IMR-90 (cell line): ENCODE measurements at regions of chr15 and their contacts with region 1.

Region 1: DNA sequence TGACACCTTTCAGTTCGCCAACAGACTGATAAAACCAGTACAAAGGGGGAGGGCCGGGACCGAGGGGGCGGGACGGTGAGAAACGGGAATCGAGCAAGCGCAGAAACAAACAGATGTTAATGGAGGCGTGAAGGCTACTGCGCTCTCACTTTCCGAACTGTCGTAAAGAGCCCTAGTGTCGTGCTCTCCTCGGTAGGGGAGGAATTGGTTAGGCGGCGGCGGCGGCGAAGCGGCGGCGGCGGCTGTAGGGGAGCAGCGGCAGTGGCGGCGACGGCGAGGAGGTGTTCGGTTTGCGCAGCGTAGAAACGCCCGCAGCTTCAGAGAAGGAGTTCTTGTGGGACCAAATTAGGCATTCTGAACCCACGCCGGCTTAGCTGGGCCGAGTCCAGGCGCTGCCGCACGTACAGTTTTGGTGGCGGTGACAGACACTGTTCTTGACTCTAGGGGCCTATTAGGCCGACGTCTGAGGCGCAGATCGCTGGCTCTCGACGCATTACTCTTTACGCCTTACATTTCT is at the start of gene RNF111:
- DNase-seq: peak; percentile 97
- ATAC-seq: peak; percentile 93
- H3K4me3 ChIP-seq: peak within 1 kb of the TSS; percentile 98
- H3K27ac ChIP-seq: peak within 1 kb of the TSS; percentile 97
- H3K4me1 ChIP-seq: no peaks in the 10 kb centered on the region
- H3K27me3 ChIP-seq: no peaks in the 10 kb centered on the region
- CTCF ChIP-seq: no peak
- POLR2A ChIP-seq: peak; percentile 29; the same call in 1 of the 2 replicates
- RAD21 ChIP-seq: no peak
- total RNA-seq, gene RNF111: 17.2 and 20.1 TPM in 2 replicates

Region 2: GRCh38 chr15:58742022-58742813 is 245.3 kb before region 1 on chr15:
- CTCF ChIA-PET with region 1: no interaction called
- POLR2A ChIA-PET with region 1: no interaction called
- dilution Hi-C with region 1: no loop called
- in situ Hi-C with region 1: no loop called
- intact Hi-C with region 1: no loop called
- DNase-seq: peak; percentile 92
- ATAC-seq: peak; percentile 92
- H3K4me3 ChIP-seq: peak overlapping the region; percentile 1; the same call in 1 of the 2 replicates
- H3K27ac ChIP-seq: peak overlapping the region; percentile 74
- H3K4me1 ChIP-seq: peaks cover 11% of the 10 kb centered on the region
- H3K27me3 ChIP-seq: no peaks in the 10 kb centered on the region
- CTCF ChIP-seq: no peak
- POLR2A ChIP-seq: no peak
- RAD21 ChIP-seq: no peak

Region 3: GRCh38 chr15:59104912-59105732 is 117.6 kb after region 1 on chr15 and contains the start of gene CCNB2:
- CTCF ChIA-PET with region 1: no interaction called
- POLR2A ChIA-PET with region 1: no interaction called
- dilution Hi-C with region 1: no loop called
- in situ Hi-C with region 1: no loop called
- intact Hi-C with region 1: loop called (anchors 5 kb)
- DNase-seq: peak; percentile 94
- ATAC-seq: peak; percentile 99
- H3K4me3 ChIP-seq: peak within 1 kb of the TSS; percentile 77
- H3K27ac ChIP-seq: peak within 1 kb of the TSS; percentile 65
- H3K4me1 ChIP-seq: no peaks in the 10 kb centered on the region
- H3K27me3 ChIP-seq: no peaks in the 10 kb centered on the region
- CTCF ChIP-seq: no peak
- POLR2A ChIP-seq: peak; percentile 59; the same call in 1 of the 2 replicates
- RAD21 ChIP-seq: no peak
- total RNA-seq, gene CCNB2: 52.5 and 57.2 TPM in 2 replicates